CD4-positive, alpha-beta T cell (primary cell): ENCODE measurements at regions of chr1 and their contacts with region 1.

Region 1: GRCh38 chr1:8911416-8911815 is 32.9 kb upstream of the ENO1 start:
- DNase-seq: no peak
- ATAC-seq: no peak
- H3K4me3 ChIP-seq: no peak overlapping the region
- H3K4me3 Mint-ChIP-seq: no peak overlapping the region
- H3K27ac ChIP-seq: no peak overlapping the region
- H3K27ac Mint-ChIP-seq: no peak overlapping the region
- H3K4me1 ChIP-seq: no peaks in the 10 kb centered on the region
- H3K4me1 Mint-ChIP-seq: no peaks in the 10 kb centered on the region
- H3K27me3 ChIP-seq: peaks cover 0 to 6% of the 10 kb centered on the region in 2 experiments
- H3K27me3 Mint-ChIP-seq: no peaks in the 10 kb centered on the region
- CTCF ChIP-seq: no peak

Region 2: GRCh38 chr1:9101510-9102146 is 190.2 kb after region 1 on chr1:
- CTCF ChIA-PET with region 1: no interaction called
- POLR2A ChIA-PET with region 1: no interaction called
- intact Hi-C with region 1: loop called in 1 of 2 experiments (anchors 5 kb)
- DNase-seq: peak in 1 of 14 experiments; percentile 33
- ATAC-seq: no peak
- H3K4me3 ChIP-seq: no peak overlapping the region
- H3K4me3 Mint-ChIP-seq: no peak overlapping the region
- H3K27ac ChIP-seq: no peak overlapping the region
- H3K27ac Mint-ChIP-seq: no peak overlapping the region
- H3K4me1 ChIP-seq: no peaks in the 10 kb centered on the region
- H3K4me1 Mint-ChIP-seq: no peaks in the 10 kb centered on the region
- H3K27me3 ChIP-seq: no peaks in the 10 kb centered on the region
- H3K27me3 Mint-ChIP-seq: no peaks in the 10 kb centered on the region
- CTCF ChIP-seq: no peak